Adrenal gland (tissue), 19 donors: ENCODE measurements at regions of chr3 and their contacts with region 1.

Region 1: DNA sequence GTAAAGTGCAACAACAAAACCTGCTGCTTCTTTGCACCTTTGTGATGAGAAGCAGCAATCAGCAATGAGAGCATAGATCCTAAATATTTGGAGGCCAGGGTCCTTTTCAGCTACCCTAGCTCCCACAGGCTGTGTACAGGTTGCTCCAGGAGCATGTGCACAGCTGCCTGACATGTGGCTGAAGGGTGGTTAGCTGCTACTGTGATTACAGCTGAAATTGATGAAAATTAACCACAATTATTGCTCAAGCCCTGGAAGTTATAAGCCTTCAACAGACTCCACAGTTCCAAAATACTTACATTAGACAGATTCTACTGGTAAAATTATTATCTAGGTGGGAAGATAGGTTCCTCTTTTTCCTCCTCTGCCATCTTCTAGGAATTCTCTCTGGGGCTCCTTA is 28.5 kb downstream of the COMMD2 start:
- DNase-seq: no peak
- H3K4me3 ChIP-seq: no peak overlapping the region
- H3K27ac ChIP-seq: no peak overlapping the region
- H3K4me1 ChIP-seq: no peaks in the 10 kb centered on the region
- H3K27me3 ChIP-seq: no peaks in the 10 kb centered on the region
- CTCF ChIP-seq: no peak
- POLR2A ChIP-seq: no peak

Region 2: GRCh38 chr3:149527531-149528339 is 196.0 kb before region 1 on chr3:
- intact Hi-C with region 1: loop called in 1 of 2 experiments (anchors 5 kb)
- DNase-seq: no peak
- H3K4me3 ChIP-seq: no peak overlapping the region
- H3K27ac ChIP-seq: no peak overlapping the region
- H3K4me1 ChIP-seq: peaks cover 5 to 13% of the 10 kb centered on the region in 2 donors
- H3K27me3 ChIP-seq: no peaks in the 10 kb centered on the region
- CTCF ChIP-seq: no peak
- POLR2A ChIP-seq: no peak

Region 3: GRCh38 chr3:149820180-149820579 is 96.4 kb after region 1 on chr3:
- intact Hi-C with region 1: no loop called
- DNase-seq: no peak
- H3K4me3 ChIP-seq: no peak overlapping the region
- H3K27ac ChIP-seq: no peak overlapping the region
- H3K4me1 ChIP-seq: peaks cover 3 to 39% of the 10 kb centered on the region in 2 donors
- H3K27me3 ChIP-seq: no peaks in the 10 kb centered on the region
- CTCF ChIP-seq: no peak
- POLR2A ChIP-seq: no peak